Activated CD4-positive, alpha-beta T cell treated with anti-CD3 and anti-CD28 coated beads for 36 hours (primary cell): ENCODE measurements at regions of chr4 and their contacts with region 1.

Region 1: DNA sequence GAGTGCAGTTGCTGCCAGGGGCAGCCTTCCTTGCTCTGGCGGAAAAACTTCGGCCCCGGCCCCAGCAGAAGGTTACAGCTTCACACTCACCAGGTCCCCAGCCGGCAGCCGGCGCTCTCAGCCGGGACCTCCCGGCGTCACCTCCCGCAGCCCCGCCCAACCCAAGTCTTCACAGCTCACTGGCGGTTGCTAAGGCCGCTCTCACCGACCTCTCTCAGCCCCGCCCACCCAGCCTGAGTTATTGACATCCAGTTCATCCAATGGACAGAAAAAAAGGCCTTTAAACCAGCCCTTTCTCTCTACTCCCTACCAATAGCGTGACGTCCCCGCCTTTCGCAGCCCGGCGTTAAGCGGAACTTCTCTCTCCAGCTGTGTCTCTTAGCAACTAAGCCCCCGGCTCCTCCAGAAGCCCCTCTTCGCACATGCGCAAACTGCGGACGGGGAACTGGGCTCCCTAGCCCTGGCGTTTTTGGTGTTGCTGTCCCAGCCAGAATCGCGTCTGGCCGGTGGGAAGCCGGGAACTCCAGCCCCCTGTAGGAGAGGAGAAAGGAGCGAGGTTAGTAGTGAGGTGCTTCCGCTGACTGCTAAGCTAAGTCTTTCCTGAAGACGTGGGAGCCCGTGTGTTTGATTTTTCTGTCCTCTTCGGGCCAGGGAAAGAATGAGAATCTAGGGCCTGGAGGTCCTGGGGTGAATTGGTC is at the start of gene BBS12:
- DNase-seq: peak; percentile 99
- ATAC-seq: peak; percentile 100
- H3K4me3 Mint-ChIP-seq: peak within 1 kb of the TSS; percentile 96
- H3K27ac Mint-ChIP-seq: peak within 1 kb of the TSS; percentile 88
- H3K4me1 Mint-ChIP-seq: peaks cover 26% of the 10 kb centered on the region
- H3K27me3 Mint-ChIP-seq: no peaks in the 10 kb centered on the region
- total RNA-seq, gene BBS12: 2.8 to 3.9 TPM

Region 2: GRCh38 chr4:121823505-121824170 is 908.8 kb before region 1 on chr4 and contains the start of gene CCNA2:
- CTCF ChIA-PET with region 1: no interaction called
- POLR2A ChIA-PET with region 1: no interaction called
- intact Hi-C with region 1: loop called in 1 of 2 experiments (anchors 2 kb)
- DNase-seq: peak; percentile 98
- ATAC-seq: peak; percentile 97
- H3K4me3 Mint-ChIP-seq: peak within 1 kb of the TSS; percentile 97
- H3K27ac Mint-ChIP-seq: peak within 1 kb of the TSS; percentile 88
- H3K4me1 Mint-ChIP-seq: peaks cover 16% of the 10 kb centered on the region
- H3K27me3 Mint-ChIP-seq: no peaks in the 10 kb centered on the region
- total RNA-seq, gene CCNA2: 113 to 118 TPM

Region 3: DNA sequence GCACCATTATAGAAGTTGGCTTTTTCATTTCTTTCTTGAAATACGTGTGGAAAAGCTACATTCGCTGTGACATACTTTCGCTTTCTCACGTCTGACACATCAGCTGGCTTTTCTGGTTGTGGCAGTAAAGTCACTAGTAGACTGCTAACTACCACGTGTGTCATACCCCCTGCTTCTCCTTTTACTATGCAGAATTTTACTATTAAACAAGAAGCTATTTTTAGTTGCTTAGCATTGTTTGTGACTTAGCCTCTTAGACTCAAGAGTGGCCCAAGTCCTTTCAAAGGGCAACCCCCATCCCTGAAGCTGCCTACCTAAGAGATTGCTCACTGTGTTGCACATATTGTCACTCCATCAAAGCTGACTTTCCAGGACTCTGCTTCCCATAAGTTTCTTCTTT is 273.9 kb before region 1 on chr4:
- CTCF ChIA-PET with region 1: no interaction called
- POLR2A ChIA-PET with region 1: no interaction called
- intact Hi-C with region 1: loop called in 1 of 2 experiments (anchors 5 kb)
- DNase-seq: peak; percentile 74
- ATAC-seq: peak; percentile 86
- H3K4me3 Mint-ChIP-seq: peak overlapping the region; percentile 62
- H3K27ac Mint-ChIP-seq: peak overlapping the region; percentile 89
- H3K4me1 Mint-ChIP-seq: peaks cover 51% of the 10 kb centered on the region
- H3K27me3 Mint-ChIP-seq: no peaks in the 10 kb centered on the region

Region 4: GRCh38 chr4:122700178-122700725 is 32.2 kb before region 1 on chr4:
- CTCF ChIA-PET with region 1: interaction called, 10 read pairs
- POLR2A ChIA-PET with region 1: no interaction called
- intact Hi-C with region 1: no loop called
- DNase-seq: no peak
- ATAC-seq: peak; percentile 8
- H3K4me3 Mint-ChIP-seq: peak overlapping the region; percentile 71
- H3K27ac Mint-ChIP-seq: peak overlapping the region; percentile 93
- H3K4me1 Mint-ChIP-seq: peaks cover 59% of the 10 kb centered on the region
- H3K27me3 Mint-ChIP-seq: peaks cover 5% of the 10 kb centered on the region

Region 5: DNA sequence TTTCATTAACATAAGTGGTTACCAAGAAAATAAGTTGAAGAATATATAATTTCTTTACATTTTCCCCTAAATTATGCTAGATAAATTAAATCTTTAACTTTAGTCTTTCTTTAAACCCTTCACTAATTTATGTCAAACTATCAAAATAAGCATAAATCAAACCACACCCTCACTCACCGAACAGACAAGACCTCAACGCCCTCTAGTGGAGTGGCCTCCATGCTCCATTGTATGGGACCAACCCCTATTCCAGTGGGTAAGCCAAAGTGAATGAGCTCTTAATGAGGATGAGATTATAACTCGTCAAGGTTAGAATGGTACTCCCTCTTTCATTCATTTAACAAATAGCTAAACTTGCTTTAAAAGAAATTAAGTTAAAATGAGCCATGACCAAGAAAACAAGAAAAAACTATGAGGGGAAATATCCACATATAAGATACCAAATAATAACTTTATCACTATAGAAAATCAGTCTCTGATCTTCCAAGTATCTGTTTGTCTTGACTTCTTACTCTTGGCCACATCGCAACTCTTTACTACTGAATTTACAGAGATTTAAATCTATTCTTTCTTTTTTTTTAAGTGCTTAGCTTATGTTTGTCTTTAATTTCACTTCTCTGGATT is 15.5 kb before region 1 on chr4:
- CTCF ChIA-PET with region 1: interaction called, 37 read pairs
- POLR2A ChIA-PET with region 1: interaction called, 4 read pairs
- intact Hi-C with region 1: loop called in 1 of 2 experiments (anchors 2 kb)
- DNase-seq: peak; percentile 89
- ATAC-seq: peak; percentile 90
- H3K4me3 Mint-ChIP-seq: peak overlapping the region; percentile 26
- H3K27ac Mint-ChIP-seq: peak overlapping the region; percentile 72
- H3K4me1 Mint-ChIP-seq: peaks cover 43% of the 10 kb centered on the region
- H3K27me3 Mint-ChIP-seq: peaks cover 2% of the 10 kb centered on the region

Region 6: GRCh38 chr4:122758033-122758432 is 25.6 kb after region 1 on chr4:
- CTCF ChIA-PET with region 1: interaction called, 15 read pairs
- POLR2A ChIA-PET with region 1: no interaction called
- intact Hi-C with region 1: no loop called
- DNase-seq: no peak
- ATAC-seq: peak; percentile 33
- H3K4me3 Mint-ChIP-seq: no peak overlapping the region
- H3K27ac Mint-ChIP-seq: no peak overlapping the region
- H3K4me1 Mint-ChIP-seq: peaks cover 16% of the 10 kb centered on the region
- H3K27me3 Mint-ChIP-seq: peaks cover 12% of the 10 kb centered on the region

Region 7: DNA sequence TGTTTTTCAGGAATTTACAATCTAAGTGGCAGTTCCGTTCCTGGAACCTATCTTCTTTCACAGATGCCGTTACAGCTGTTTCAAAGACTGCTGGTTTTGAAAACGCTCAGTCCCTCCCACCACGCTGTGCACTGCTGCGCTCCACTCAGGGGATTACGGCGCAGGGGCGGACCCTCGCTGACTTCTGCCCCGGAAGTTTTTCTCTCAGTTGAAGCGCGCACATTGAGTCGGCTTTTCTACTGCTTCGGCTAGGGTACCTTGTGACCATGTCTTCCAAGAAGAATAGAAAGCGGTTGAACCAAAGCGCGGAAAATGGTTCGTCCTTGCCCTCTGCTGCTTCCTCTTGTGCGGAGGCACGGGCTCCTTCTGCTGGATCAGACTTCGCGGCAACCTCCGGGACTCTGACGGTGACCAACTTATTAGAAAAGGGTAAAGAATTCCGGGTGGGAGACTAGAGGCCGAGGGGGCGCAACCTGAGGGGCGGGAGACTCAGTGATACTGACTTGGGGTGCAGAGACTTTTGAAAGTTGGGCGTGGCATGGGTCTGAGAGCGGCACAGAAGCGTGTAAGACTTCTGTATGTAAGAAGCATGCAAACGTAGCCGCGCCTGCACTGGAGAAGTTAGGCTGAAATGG is 190.5 kb after region 1 on chr4:
- CTCF ChIA-PET with region 1: interaction called, 19 read pairs
- POLR2A ChIA-PET with region 1: no interaction called
- intact Hi-C with region 1: loop called (anchors 1 kb)
- DNase-seq: peak; percentile 93
- ATAC-seq: peak; percentile 98
- H3K4me3 Mint-ChIP-seq: no peak overlapping the region
- H3K27ac Mint-ChIP-seq: peak overlapping the region; percentile 87
- H3K4me1 Mint-ChIP-seq: peaks cover 9% of the 10 kb centered on the region
- H3K27me3 Mint-ChIP-seq: no peaks in the 10 kb centered on the region